KBM-7 (cell line): ENCODE measurements at regions of chr1 and their contacts with region 1.

Region 1: DNA sequence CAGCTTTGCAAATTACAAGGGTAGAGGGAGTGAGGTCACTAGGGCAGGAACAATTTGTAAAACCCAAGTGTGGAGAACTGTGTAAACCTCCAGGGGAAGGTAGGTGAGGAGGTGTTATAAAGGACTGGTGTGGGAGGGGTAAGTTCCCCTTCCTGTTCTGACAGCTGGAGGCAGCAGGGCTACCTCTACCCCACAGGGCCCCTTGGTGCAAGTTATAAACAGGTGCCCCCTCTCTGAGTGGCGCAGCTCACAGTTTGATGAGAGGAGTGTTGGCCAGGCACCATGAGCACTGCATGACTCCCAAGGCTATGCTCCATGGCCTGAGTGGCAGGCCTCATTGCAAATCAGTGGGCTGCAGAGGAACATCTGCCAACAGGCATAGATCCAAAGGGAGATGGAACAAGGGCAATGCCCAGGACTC is 41.0 kb downstream of the MFSD2A start:
- DNase-seq: peak; percentile 45

Region 2: DNA sequence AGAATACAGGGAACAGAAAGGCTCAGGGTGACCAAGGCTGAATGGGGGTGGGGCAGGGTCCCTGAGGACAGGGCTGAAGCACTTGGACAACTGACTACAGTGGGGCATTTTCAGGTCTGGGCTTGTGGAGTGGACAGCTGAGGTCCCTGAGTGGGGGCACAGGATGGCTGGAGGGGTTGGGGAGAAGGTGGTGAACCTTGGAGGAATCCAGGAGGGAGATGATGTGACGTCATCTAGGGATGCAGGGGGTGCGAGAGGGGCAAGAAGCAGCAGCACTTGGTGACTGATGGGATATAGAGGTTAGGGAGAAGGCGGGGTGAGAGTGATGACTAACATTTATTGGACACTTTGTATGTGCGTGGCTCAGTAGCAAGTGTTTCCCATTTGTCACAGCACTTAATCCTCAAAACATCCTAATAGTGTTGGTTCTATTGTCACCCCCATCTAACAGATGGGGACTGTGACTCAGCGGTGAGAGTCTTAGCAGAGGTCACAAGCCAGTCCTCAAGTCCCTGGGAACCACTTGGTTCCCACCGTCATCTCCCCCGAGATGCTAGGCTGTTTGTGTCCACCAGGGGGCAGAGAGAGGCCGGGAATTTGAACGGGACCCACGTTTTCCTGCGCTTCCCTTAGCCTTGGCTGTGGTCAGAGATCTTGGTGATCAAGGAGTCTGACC is 179.4 kb before region 1 on chr1:
- in situ Hi-C with region 1: loop called (anchors 25 kb)
- DNase-seq: peak; percentile 83